Activated naive CD4-positive, alpha-beta T cell treated with anti-CD3 and anti-CD28 coated beads, Interleukin-2, amount 10 ng/mL, durations not matched to agents 7 days and 5 days (primary cell): ENCODE measurements at regions of chr10 and their contacts with region 1.

Region 1: DNA sequence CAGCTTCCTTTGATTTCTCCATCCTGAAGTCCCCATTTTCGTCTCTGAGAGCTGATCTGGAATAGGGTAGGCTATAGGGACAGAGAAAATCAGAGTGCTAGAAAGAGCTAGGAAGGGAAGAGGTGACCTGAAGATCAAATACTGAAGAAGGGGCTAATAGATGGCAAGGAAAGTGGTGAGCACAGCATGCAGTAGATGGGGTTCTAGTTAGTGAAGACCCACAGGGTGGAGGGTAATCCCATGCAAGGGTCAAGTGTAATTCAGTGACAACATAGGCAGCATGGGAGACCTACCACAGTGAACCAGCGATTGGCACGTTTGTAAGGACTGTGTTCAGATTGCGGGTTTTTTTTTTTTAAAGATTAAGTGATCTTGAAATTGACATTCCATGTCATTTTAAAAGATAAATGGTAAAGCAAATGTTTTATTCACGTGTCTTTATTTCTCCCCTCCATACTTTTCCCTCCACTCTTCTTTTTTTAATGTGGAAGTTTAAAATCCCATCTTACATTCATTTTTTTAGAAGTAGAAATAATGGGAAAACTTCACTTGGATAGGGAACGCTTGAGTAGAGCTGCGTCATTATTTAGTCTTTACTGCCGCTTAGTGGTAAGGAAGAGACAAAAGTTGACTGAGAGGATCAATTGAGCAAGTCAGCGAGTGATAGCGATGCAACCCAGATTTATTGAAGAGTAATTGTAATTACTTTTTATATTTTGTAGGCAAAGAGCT is 21.0 kb upstream of the ABI1 start:
- DNase-seq: no peak
- H3K4me3 Mint-ChIP-seq: no peak overlapping the region
- H3K27ac Mint-ChIP-seq: no peak overlapping the region
- H3K4me1 Mint-ChIP-seq: peaks cover 3% of the 10 kb centered on the region
- H3K27me3 Mint-ChIP-seq: peaks cover 24% of the 10 kb centered on the region

Region 2: DNA sequence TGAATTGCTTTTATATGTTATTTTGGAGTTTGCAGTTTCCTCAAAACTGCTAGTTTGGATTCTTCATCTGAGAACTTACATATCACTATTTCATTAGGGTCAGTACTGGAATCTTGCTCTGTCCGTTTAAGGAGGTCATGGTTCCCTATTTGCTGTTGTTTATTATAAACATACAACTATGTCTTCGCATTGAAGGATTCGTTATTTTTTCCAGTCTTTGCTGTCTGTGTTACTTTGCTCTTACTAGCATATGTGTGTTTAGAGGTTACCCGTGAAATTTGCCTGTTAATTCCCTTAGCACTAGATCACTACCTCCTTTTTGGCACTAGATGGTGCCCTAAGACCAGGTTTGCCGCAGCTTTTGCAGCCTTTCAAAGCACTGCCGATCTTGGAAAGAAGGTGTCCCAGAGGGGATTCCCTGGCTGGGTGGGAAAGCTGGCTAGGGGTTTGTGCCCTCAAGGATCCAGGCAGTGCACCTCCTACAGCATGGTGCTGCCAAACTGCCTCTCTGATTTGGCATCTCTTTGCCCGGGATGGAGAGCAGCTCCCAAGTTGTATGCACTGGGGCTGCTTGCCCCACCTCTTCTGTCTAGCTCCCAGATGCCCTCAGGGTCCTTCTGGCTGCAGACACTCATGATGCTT is 546.7 kb before region 1 on chr10:
- CTCF ChIA-PET with region 1: interaction called, 26 read pairs
- DNase-seq: peak; percentile 73
- H3K4me3 Mint-ChIP-seq: peak overlapping the region; percentile 57
- H3K27ac Mint-ChIP-seq: no peak overlapping the region
- H3K4me1 Mint-ChIP-seq: peaks cover 13% of the 10 kb centered on the region
- H3K27me3 Mint-ChIP-seq: no peaks in the 10 kb centered on the region

Region 3: DNA sequence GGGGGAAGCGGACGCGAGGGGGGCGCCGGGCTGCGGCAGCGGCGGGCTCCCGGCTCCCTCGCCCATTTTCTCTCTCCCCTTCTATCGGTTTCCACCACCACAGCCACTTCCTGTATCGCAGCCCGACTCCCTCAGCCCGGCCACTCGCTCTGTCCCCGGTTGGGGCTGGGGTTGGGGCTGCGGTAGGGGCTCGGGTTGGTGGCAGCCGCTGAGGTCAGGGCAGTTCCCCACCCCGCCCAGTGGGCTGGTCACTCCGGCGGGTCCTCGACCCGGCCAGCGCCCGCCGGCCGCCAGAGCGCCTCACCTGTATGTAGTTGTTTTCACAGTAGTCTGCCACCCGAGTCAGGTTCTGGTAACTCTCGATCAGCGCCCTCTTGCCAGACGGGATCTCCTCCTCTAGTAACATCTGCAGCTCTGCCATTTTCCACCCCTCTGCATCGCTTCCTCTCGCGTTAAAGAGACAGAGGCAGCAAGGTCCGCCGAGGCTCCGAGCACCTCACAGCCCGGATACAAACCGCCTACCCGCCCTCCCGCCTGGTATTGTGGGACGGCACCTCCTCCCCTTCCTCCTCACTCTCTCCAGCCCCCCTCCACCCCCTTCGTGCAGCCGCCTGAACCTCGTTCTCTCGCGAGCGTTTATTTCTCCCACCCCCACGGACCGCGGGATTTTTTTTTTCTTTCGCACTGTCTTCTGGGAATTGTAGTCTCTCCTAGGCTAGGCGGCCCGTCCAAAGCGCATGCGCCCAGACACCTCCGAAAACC is 21.1 kb before region 1 on chr10 and contains the start of gene ABI1:
- CTCF ChIA-PET with region 1: interaction called, 19 read pairs
- DNase-seq: peak; percentile 98
- H3K4me3 Mint-ChIP-seq: peak within 1 kb of the TSS; percentile 98
- H3K27ac Mint-ChIP-seq: peak within 1 kb of the TSS; percentile 100
- H3K4me1 Mint-ChIP-seq: peaks cover 37% of the 10 kb centered on the region
- H3K27me3 Mint-ChIP-seq: peaks cover 24% of the 10 kb centered on the region